CD4-positive, alpha-beta T cell (primary cell): ENCODE measurements at regions of chr22 and their contacts with region 1.

Region 1: DNA sequence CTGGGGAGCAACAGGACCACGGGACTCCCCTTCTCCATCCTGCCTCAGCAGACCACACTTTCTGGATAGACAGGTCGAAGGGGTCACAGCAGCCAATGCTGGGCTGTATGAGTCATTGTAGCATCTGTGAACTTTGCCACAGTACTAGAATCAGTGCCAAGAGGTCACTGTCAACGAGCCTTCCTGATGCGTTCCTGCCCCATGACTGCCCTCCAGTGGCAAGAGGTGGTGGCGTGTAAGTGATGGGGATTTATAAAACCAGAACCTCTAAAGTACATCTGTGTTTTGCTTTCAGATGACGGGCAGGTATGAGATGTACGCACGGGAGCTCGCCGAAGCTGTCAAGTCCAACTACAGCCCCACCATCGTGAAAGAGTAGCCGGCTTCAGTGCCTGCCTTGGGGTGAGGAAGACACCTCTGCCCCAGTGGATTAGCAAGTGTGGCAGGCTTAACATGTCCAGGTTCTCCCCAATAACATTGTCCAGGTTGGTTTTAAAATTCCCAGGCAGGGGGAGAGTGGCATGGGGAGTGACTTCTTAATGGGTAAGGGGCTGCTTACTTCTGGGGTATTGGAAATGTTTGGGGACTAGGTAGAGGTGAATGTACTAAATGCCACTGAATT is 29.4 kb downstream of the GUCD1 start:
- DNase-seq: peak; percentile 60 to 88 (median 72)
- ATAC-seq: peak; percentile 98
- H3K4me3 ChIP-seq: no peak overlapping the region
- H3K4me3 Mint-ChIP-seq: no peak overlapping the region
- H3K27ac ChIP-seq: no peak overlapping the region
- H3K27ac Mint-ChIP-seq: no peak overlapping the region
- H3K4me1 ChIP-seq: peaks cover 13% of the 10 kb centered on the region
- H3K4me1 Mint-ChIP-seq: peaks cover 6% of the 10 kb centered on the region
- H3K27me3 ChIP-seq: no peaks in the 10 kb centered on the region
- H3K27me3 Mint-ChIP-seq: no peaks in the 10 kb centered on the region
- CTCF ChIP-seq: peak; percentile 70

Region 2: GRCh38 chr22:24189249-24190158 is 336.0 kb before region 1 on chr22:
- CTCF ChIA-PET with region 1: no interaction called
- POLR2A ChIA-PET with region 1: no interaction called
- intact Hi-C with region 1: loop called in 1 of 2 experiments (anchors 10 kb)
- DNase-seq: peak in 11 of 14 experiments; percentile 16 to 64 (median 27)
- ATAC-seq: peak; percentile 78
- H3K4me3 ChIP-seq: no peak overlapping the region
- H3K4me3 Mint-ChIP-seq: no peak overlapping the region
- H3K27ac ChIP-seq: no peak overlapping the region
- H3K27ac Mint-ChIP-seq: no peak overlapping the region
- H3K4me1 ChIP-seq: peaks cover 6% of the 10 kb centered on the region
- H3K4me1 Mint-ChIP-seq: no peaks in the 10 kb centered on the region
- H3K27me3 ChIP-seq: no peaks in the 10 kb centered on the region
- H3K27me3 Mint-ChIP-seq: no peaks in the 10 kb centered on the region
- CTCF ChIP-seq: peak; percentile 47

Region 3: GRCh38 chr22:24482575-24482974 is 43.0 kb before region 1 on chr22:
- CTCF ChIA-PET with region 1: no interaction called
- POLR2A ChIA-PET with region 1: no interaction called
- intact Hi-C with region 1: no loop called
- DNase-seq: peak in 2 of 14 experiments; percentile 27 to 42
- ATAC-seq: no peak
- H3K4me3 ChIP-seq: no peak overlapping the region
- H3K4me3 Mint-ChIP-seq: no peak overlapping the region
- H3K27ac ChIP-seq: no peak overlapping the region
- H3K27ac Mint-ChIP-seq: no peak overlapping the region
- H3K4me1 ChIP-seq: no peaks in the 10 kb centered on the region
- H3K4me1 Mint-ChIP-seq: no peaks in the 10 kb centered on the region
- H3K27me3 ChIP-seq: no peaks in the 10 kb centered on the region
- H3K27me3 Mint-ChIP-seq: no peaks in the 10 kb centered on the region
- CTCF ChIP-seq: no peak

Region 4: DNA sequence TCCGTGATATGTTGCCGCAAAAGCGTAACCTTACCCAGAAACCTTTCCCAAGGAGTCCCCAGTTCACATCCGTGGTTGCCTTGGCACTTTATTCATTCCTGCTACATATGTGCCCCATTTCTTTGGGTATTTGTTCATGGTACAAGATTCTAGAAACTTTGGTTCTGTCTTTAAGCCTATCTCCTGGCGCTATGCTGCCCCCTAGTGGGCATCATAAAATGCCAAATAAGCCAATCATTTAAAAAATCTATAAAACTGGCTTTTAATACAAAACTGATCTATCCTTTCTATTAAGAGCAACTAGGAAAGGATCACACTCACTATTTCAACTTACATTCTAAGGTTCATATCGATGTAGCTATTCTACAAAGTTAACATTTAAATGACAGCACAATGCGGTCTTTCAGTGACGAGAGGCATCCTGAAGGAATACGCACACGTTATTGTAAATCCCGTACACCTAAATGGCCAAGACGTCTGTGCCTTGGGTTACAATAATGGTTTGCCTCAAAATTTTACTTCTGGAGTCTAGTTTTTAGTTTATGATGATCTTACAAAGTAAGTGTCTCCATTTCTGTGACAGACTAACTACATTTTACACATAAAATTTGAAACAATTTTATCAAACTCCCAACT is 232.8 kb after region 1 on chr22:
- CTCF ChIA-PET with region 1: no interaction called
- POLR2A ChIA-PET with region 1: no interaction called
- intact Hi-C with region 1: loop called in 1 of 2 experiments (anchors 10 kb)
- DNase-seq: peak; percentile 22 to 76 (median 46)
- ATAC-seq: no peak
- H3K4me3 ChIP-seq: no peak overlapping the region
- H3K4me3 Mint-ChIP-seq: no peak overlapping the region
- H3K27ac ChIP-seq: no peak overlapping the region
- H3K27ac Mint-ChIP-seq: no peak overlapping the region
- H3K4me1 ChIP-seq: no peaks in the 10 kb centered on the region
- H3K4me1 Mint-ChIP-seq: no peaks in the 10 kb centered on the region
- H3K27me3 ChIP-seq: peaks cover 0 to 3% of the 10 kb centered on the region in 2 experiments
- H3K27me3 Mint-ChIP-seq: peaks cover 6% of the 10 kb centered on the region
- CTCF ChIP-seq: peak; percentile 96